Activated naive CD4-positive, alpha-beta T cell treated with anti-CD3 and anti-CD28 coated beads, Interleukin-2, amount 10 ng/mL, durations not matched to agents 7 days and 5 days (primary cell): ENCODE measurements at regions of chr3 and their contacts with region 1.

Region 1: DNA sequence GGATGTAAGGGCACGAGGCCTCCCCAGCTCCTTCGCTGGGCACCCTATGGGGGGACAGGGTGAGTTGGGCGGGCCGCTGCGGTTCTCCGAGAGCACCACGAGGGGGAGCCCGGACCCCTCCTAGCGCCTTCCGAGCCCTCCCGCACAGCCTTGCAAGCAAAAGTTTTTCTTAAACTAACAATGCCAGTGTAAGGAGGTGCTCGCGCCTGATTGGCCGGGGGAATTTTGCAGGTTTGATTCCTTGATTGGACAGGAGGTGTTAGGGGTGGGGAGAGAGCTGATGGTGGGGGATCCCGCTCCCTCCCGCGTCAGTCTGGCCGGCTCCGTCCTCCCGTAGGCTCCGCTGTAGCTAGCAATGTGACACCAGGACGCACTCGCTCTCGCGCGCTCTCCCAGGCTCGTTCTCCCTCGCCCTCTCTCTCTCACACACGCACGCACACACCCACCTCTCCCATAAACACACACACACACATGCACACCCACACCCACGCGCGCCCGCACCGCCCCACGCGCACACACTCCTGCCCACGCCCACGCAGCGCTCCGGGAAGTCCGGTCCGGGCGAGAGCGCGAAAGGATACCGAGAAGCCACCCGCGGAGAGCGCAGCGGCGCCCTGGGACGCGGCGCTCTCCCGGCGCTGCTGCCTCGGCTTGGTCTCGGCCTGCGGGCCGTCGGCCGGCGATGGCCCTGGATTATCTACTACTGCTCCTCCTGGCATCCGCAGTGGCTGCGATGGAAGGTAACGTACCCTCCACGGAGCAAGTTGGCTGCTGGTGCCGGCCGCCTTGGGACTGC is at the start of gene EPHB1:
- DNase-seq: peak; percentile 85
- H3K4me3 Mint-ChIP-seq: peak within 1 kb of the TSS; percentile 86
- H3K27ac Mint-ChIP-seq: no peak within 1 kb of the TSS
- H3K4me1 Mint-ChIP-seq: peaks cover 18% of the 10 kb centered on the region
- H3K27me3 Mint-ChIP-seq: peaks cover 80% of the 10 kb centered on the region

Region 2: GRCh38 chr3:134838599-134838998 is 43.5 kb after region 1 on chr3:
- CTCF ChIA-PET with region 1: interaction called, 21 read pairs
- DNase-seq: no peak
- H3K4me3 Mint-ChIP-seq: no peak overlapping the region
- H3K27ac Mint-ChIP-seq: no peak overlapping the region
- H3K4me1 Mint-ChIP-seq: no peaks in the 10 kb centered on the region
- H3K27me3 Mint-ChIP-seq: peaks cover 45% of the 10 kb centered on the region

Region 3: GRCh38 chr3:135895106-135895733 is 1100.1 kb after region 1 on chr3:
- CTCF ChIA-PET with region 1: interaction called, 14 read pairs
- DNase-seq: peak; percentile 63
- H3K4me3 Mint-ChIP-seq: no peak overlapping the region
- H3K27ac Mint-ChIP-seq: no peak overlapping the region
- H3K4me1 Mint-ChIP-seq: no peaks in the 10 kb centered on the region
- H3K27me3 Mint-ChIP-seq: peaks cover 6% of the 10 kb centered on the region